Activated CD8-positive, alpha-beta T cell treated with anti-CD3 and anti-CD28 coated beads for 36 hours (primary cell): ENCODE measurements at regions of chr2 and their contacts with region 1.

Region 1: DNA sequence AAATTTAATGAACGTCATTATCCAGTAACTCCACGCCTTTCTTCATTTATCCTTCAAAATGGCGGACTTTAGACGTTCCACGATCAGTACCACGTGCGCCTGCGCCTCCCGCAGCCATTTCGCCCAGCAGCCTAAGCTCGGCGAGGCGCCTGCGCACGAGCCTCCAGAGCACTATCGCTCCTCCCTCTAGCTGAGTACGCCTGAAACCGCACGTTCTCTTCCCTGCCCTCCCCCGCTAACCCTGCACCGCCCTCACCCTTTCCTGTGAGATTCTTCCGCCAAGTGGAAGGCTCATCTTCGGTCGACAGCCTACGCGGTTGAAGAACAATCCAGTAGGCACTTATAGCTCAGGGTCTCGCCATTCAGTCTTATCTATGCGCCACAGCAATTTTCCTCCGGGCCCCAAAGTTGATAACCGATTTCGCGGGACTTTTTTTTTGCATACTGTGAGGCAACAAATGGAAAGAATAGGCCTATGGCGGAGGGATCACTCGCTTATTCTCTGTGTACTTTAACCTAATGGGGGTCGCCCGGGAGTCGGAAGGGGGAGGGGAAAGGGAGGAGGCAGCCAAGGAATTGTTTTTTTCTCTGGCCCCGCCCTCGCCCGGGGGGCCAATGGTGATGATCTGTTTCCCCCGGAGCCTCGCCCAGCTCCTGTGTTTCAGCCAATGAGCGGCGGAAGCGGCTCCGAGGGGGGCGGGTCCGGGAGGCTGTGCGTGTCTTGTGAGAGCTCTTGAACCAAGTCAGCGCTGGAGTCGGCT is at the start of gene KDM3A:
- DNase-seq: peak; percentile 100
- ATAC-seq: peak; percentile 84
- H3K4me3 Mint-ChIP-seq: peak within 1 kb of the TSS; percentile 94
- H3K27ac Mint-ChIP-seq: peak within 1 kb of the TSS; percentile 100
- H3K4me1 Mint-ChIP-seq: peaks cover 39% of the 10 kb centered on the region
- H3K27me3 Mint-ChIP-seq: no peaks in the 10 kb centered on the region
- CTCF ChIP-seq: no peak
- total RNA-seq, gene KDM3A: 107 to 114 TPM

Region 2: GRCh38 chr2:86195055-86195807 is 245.6 kb before region 1 on chr2 and contains the start of gene IMMT:
- CTCF ChIA-PET with region 1: no interaction called
- POLR2A ChIA-PET with region 1: interaction called, 10 read pairs
- intact Hi-C with region 1: loop called (anchors 5 kb)
- DNase-seq: peak; percentile 97
- ATAC-seq: peak; percentile 93
- H3K4me3 Mint-ChIP-seq: peak within 1 kb of the TSS; percentile 93
- H3K27ac Mint-ChIP-seq: peak within 1 kb of the TSS; percentile 90
- H3K4me1 Mint-ChIP-seq: peaks cover 32% of the 10 kb centered on the region
- H3K27me3 Mint-ChIP-seq: no peaks in the 10 kb centered on the region
- CTCF ChIP-seq: no peak
- total RNA-seq, gene IMMT: 143 to 144 TPM

Region 3: GRCh38 chr2:86201671-86202335 is 239.0 kb before region 1 on chr2:
- CTCF ChIA-PET with region 1: interaction called, 4 read pairs
- POLR2A ChIA-PET with region 1: interaction called, 10 read pairs
- intact Hi-C with region 1: loop called (anchors 5 kb)
- DNase-seq: no peak
- ATAC-seq: no peak
- H3K4me3 Mint-ChIP-seq: no peak overlapping the region
- H3K27ac Mint-ChIP-seq: no peak overlapping the region
- H3K4me1 Mint-ChIP-seq: peaks cover 33% of the 10 kb centered on the region
- H3K27me3 Mint-ChIP-seq: no peaks in the 10 kb centered on the region
- CTCF ChIP-seq: no peak

Region 4: GRCh38 chr2:86364894-86365293 is 75.9 kb before region 1 on chr2:
- CTCF ChIA-PET with region 1: no interaction called
- POLR2A ChIA-PET with region 1: no interaction called
- intact Hi-C with region 1: no loop called
- DNase-seq: no peak
- ATAC-seq: no peak
- H3K4me3 Mint-ChIP-seq: no peak overlapping the region
- H3K27ac Mint-ChIP-seq: no peak overlapping the region
- H3K4me1 Mint-ChIP-seq: peaks cover 12% of the 10 kb centered on the region
- H3K27me3 Mint-ChIP-seq: no peaks in the 10 kb centered on the region
- CTCF ChIP-seq: no peak

Region 5: DNA sequence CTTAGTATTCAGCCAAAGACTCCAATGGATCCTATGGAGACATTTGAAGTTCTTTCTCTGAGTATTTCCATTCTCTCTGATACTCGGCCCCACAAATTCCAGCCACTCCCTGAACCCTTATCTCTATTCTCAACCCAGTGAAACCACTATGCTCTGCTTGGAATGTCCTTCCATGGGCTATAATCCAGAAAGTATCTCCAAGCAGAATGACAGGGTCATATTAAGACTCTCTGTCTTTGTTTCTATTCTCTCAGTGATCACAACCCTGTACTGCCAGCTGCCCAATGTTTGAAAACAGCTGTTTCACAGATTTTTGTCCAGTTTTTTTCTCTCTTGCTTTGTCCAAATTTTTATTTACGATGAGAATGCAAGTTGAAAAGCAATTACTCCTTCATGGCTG is 100.5 kb after region 1 on chr2:
- CTCF ChIA-PET with region 1: no interaction called
- POLR2A ChIA-PET with region 1: no interaction called
- intact Hi-C with region 1: no loop called
- DNase-seq: no peak
- ATAC-seq: no peak
- H3K4me3 Mint-ChIP-seq: no peak overlapping the region
- H3K27ac Mint-ChIP-seq: no peak overlapping the region
- H3K4me1 Mint-ChIP-seq: peaks cover 12% of the 10 kb centered on the region
- H3K27me3 Mint-ChIP-seq: no peaks in the 10 kb centered on the region
- CTCF ChIP-seq: no peak